ENCODE measurements at regions of chr18 and their contacts with region 1.

Region 1: DNA sequence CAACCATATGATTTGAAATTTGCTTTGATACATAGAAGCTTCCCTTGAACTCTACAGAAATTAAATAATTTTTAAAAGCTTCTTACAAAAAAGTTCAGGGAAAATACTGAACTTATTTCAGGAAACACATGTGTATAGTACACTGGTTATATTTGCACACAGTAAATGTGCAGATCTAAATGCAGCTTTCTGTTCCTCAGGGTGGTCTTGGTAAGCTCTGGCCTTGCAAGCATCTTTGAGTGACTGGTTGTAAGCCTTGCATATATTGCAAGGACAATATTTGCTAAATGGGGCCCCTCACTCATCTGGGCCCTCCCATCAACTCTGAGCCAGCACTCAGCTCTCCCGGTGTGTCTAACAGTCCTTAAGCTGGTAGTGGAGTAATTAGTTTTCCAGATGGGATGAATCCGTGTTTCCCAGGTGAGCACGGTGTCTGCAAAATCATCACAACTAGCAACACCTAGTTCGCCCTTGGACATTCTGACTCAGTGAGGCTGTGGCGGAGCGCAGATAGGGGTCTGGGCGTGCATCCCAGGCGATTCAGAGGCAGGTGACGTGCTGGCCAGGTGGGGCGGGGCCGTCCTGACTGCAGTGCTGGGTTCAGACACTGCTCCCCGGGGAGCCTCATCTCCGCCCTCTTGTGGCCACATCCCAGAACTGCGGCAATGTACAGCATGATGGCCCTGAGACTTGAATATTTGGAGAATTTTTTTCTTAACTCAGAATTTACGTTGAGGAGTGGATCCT is 149.6 kb downstream of the MBP start:
- DNase-seq: peak; percentile 73 to 95
- H3K4me3 ChIP-seq: no peak overlapping the region
- CTCF ChIP-seq: peak in 1 of 3 donors; percentile 54
- POLR2A ChIP-seq: no peak

Region 2: GRCh38 chr18:76593843-76594242 is 389.2 kb before region 1 on chr18:
- intact Hi-C with region 1: no loop called
- DNase-seq: peak in 1 of 2 donors; percentile 32
- H3K4me3 ChIP-seq: no peak overlapping the region
- CTCF ChIP-seq: no peak
- POLR2A ChIP-seq: no peak

Region 3: DNA sequence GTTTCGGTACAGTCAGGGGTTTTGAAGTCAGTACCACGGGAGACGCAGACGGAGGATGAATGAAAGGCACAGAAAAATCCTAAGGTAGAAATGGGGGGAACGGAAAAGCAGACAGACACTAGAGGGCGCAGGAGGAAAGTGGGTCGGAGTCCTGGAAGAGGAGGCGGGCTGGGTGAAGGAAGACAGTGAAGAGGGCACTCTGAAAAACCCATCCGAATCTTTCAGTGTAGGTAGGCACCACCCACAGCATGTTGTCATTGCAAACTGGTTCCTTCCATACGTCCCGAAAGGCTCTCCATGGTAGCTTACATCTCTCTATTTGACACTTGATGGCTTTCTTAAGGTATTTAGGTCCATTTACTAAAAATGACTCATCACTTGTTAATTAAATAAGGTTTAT is 179.2 kb before region 1 on chr18:
- intact Hi-C with region 1: loop called (anchors 10 kb)
- DNase-seq: peak; percentile 36 to 90
- H3K4me3 ChIP-seq: no peak overlapping the region
- CTCF ChIP-seq: no peak
- POLR2A ChIP-seq: no peak

Measured in lower leg skin (tissue), 4 donors.